Activated CD4-positive, alpha-beta T cell treated with anti-CD3 and anti-CD28 coated beads for 36 hours (primary cell): ENCODE measurements at regions of chr2 and their contacts with region 1.

Region 1: DNA sequence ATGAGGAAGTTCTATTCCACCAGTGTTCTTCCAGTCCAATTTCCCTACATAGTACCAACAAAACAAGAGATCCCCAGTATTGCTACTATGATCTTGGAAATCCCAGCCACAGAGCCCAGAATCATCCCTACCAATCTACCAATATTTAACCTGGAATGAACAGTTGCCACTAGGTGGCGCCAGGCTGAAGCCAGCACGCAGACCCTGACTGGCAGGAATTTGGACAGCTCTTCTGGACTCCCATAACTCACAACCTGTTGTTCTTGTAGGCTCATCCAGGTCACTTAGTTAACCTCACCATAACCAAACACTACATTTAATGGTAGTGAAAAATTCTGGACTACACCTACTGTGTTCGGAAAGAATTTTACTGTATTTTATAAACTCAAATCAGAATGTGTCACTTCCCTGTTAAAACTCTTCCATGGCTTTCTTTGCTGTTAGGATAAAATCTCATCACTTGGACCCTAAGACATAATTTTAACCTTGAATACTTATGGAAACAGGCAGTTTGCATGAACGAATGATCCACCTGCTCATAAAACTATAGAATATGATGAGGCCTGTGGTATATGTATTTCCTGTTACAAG is 59.8 kb upstream of the SLC38A11 start:
- DNase-seq: peak; percentile 78
- ATAC-seq: peak; percentile 63
- H3K4me3 Mint-ChIP-seq: no peak overlapping the region
- H3K27ac Mint-ChIP-seq: no peak overlapping the region
- H3K4me1 Mint-ChIP-seq: no peaks in the 10 kb centered on the region
- H3K27me3 Mint-ChIP-seq: peaks cover 7% of the 10 kb centered on the region

Region 2: GRCh38 chr2:164688906-164689419 is 326.2 kb before region 1 on chr2:
- CTCF ChIA-PET with region 1: no interaction called
- POLR2A ChIA-PET with region 1: no interaction called
- intact Hi-C with region 1: no loop called
- DNase-seq: no peak
- ATAC-seq: no peak
- H3K4me3 Mint-ChIP-seq: no peak overlapping the region
- H3K27ac Mint-ChIP-seq: no peak overlapping the region
- H3K4me1 Mint-ChIP-seq: no peaks in the 10 kb centered on the region
- H3K27me3 Mint-ChIP-seq: no peaks in the 10 kb centered on the region

Region 3: GRCh38 chr2:164737612-164738081 is 277.5 kb before region 1 on chr2:
- CTCF ChIA-PET with region 1: no interaction called
- POLR2A ChIA-PET with region 1: no interaction called
- intact Hi-C with region 1: loop called (anchors 2 to 5 kb)
- DNase-seq: peak; percentile 50
- ATAC-seq: peak; percentile 65
- H3K4me3 Mint-ChIP-seq: no peak overlapping the region
- H3K27ac Mint-ChIP-seq: no peak overlapping the region
- H3K4me1 Mint-ChIP-seq: peaks cover 4% of the 10 kb centered on the region
- H3K27me3 Mint-ChIP-seq: peaks cover 6% of the 10 kb centered on the region

Region 4: DNA sequence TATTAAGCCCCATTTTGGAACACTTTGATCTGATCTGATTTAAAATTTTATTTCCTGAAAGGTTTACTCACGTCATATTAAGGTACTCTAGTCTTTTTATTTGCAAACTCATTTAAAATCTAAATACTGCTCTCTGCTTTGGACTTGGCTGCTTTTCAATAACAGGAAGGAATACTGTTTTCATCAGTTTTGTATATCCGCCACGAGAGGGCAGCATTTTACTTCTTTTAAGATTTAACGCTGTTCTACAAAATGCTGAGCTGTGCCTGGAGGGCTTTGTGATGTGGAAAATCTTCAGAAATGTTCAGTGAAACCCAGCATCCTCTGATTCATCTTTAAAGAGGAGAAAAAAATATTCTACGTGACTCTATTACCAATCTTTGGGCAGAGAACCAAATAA is 22.3 kb before region 1 on chr2:
- CTCF ChIA-PET with region 1: interaction called, 12 read pairs
- POLR2A ChIA-PET with region 1: no interaction called
- intact Hi-C with region 1: no loop called
- DNase-seq: peak; percentile 49
- ATAC-seq: peak; percentile 58
- H3K4me3 Mint-ChIP-seq: no peak overlapping the region
- H3K27ac Mint-ChIP-seq: no peak overlapping the region
- H3K4me1 Mint-ChIP-seq: peaks cover 14% of the 10 kb centered on the region
- H3K27me3 Mint-ChIP-seq: no peaks in the 10 kb centered on the region

Region 5: DNA sequence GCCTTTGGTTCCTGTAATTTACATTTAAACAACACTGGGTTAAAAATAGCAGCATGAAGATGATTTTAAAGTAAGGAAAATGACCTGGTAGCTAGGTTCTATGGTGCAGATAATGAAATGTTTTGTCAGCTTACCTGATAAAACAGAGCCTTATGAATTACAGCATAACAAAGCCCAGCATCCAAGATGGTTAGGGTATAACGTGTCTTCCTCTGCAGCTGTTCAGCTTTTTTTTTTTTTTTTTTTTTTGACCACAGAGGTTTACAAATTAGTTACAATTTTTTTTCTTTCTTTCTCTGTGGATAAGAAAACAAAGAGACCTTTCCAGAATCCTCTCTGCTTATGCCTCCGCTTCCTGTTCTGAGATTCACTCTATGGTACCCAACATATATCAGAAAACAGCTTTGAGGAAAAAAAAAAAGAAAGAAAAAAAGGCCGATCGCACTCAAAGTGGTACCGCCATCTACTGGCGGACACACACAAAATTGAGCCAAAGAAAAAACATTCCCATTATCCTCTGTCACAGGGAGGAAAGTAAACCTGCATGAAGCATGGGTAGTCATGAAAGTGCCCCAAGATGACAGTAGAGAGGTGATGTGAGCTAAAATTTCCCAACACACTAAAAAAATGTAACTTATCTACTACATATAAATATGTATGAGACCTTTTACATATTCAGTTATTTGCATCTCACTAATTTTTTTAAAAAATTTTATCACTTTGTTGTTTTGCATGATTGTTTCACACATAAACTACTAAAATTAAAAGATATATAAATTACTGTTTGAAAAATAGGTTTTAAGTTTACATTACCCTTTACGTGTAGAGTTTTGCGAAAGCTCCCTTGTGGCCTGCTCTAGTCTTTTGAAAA is 188.8 kb after region 1 on chr2 and contains the start of gene SCN3A:
- CTCF ChIA-PET with region 1: interaction called, 41 read pairs
- POLR2A ChIA-PET with region 1: no interaction called
- intact Hi-C with region 1: loop called (anchors 1 to 5 kb)
- DNase-seq: peak; percentile 30
- ATAC-seq: peak; percentile 19
- H3K4me3 Mint-ChIP-seq: no peak within 1 kb of the TSS
- H3K27ac Mint-ChIP-seq: no peak within 1 kb of the TSS
- H3K4me1 Mint-ChIP-seq: no peaks in the 10 kb centered on the region
- H3K27me3 Mint-ChIP-seq: peaks cover 2% of the 10 kb centered on the region
- total RNA-seq, gene SCN3A: 0.23 to 0.30 TPM

Region 6: GRCh38 chr2:165293440-165294353 is 278.6 kb after region 1 on chr2:
- CTCF ChIA-PET with region 1: interaction called, 5 read pairs
- POLR2A ChIA-PET with region 1: no interaction called
- intact Hi-C with region 1: loop called (anchors 2 kb)
- DNase-seq: peak; percentile 36
- ATAC-seq: peak; percentile 100
- H3K4me3 Mint-ChIP-seq: no peak overlapping the region
- H3K27ac Mint-ChIP-seq: no peak overlapping the region
- H3K4me1 Mint-ChIP-seq: peaks cover 2% of the 10 kb centered on the region
- H3K27me3 Mint-ChIP-seq: peaks cover 6% of the 10 kb centered on the region

Region 7: DNA sequence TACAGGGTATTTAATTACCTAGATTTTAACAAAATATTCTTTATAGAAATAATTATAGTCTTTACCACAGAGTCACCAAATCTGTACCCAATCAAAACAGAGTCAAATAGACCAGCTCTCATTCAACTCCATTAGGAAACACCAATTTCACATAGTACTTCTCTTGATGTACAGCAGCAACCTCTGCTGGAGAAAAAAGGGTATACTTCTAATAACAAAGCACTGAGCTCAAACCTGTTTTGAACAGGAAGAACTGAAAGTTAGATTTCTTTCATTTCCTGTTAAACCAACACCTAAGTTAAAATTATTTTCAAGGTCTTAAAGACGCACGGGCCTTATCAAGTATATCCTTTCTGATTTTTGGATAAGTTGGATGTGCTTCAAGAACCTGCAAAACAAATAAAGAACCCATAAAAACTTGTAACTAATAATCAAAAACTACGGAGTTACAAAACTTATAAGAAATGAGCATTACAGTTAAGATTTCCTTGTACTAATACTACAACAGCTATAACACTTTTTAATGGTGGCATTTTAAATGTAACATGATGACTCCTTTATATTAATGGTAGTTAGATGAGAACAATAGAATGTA is 859.4 kb after region 1 on chr2:
- CTCF ChIA-PET with region 1: interaction called, 4 read pairs
- POLR2A ChIA-PET with region 1: no interaction called
- intact Hi-C with region 1: loop called in 1 of 2 experiments (anchors 10 kb)
- DNase-seq: no peak
- ATAC-seq: peak; percentile 52
- H3K4me3 Mint-ChIP-seq: no peak overlapping the region
- H3K27ac Mint-ChIP-seq: no peak overlapping the region
- H3K4me1 Mint-ChIP-seq: peaks cover 36% of the 10 kb centered on the region
- H3K27me3 Mint-ChIP-seq: no peaks in the 10 kb centered on the region